ENCODE measurements at regions of chr1 and their contacts with region 1.

Region 1: GRCh38 chr1:168966215-168966614 is 140.3 kb upstream of the ATP1B1 start:
- DNase-seq: no peak
- H3K4me3 ChIP-seq: no peak overlapping the region
- H3K27ac ChIP-seq: no peak overlapping the region
- H3K4me1 ChIP-seq: no peaks in the 10 kb centered on the region
- H3K27me3 ChIP-seq: no peaks in the 10 kb centered on the region
- CTCF ChIP-seq: no peak

Region 2: GRCh38 chr1:169012416-169012815 is 46.2 kb after region 1 on chr1:
- intact Hi-C with region 1: loop called (anchors 5 kb)
- DNase-seq: no peak
- H3K4me3 ChIP-seq: no peak overlapping the region
- H3K27ac ChIP-seq: no peak overlapping the region
- H3K4me1 ChIP-seq: no peaks in the 10 kb centered on the region
- H3K27me3 ChIP-seq: no peaks in the 10 kb centered on the region
- CTCF ChIP-seq: no peak

Region 3: GRCh38 chr1:169072945-169073730 is 106.9 kb after region 1 on chr1:
- intact Hi-C with region 1: no loop called
- DNase-seq: peak; percentile 78
- H3K4me3 ChIP-seq: no peak overlapping the region
- H3K27ac ChIP-seq: peak overlapping the region; percentile 87
- H3K4me1 ChIP-seq: no peaks in the 10 kb centered on the region
- H3K27me3 ChIP-seq: no peaks in the 10 kb centered on the region
- CTCF ChIP-seq: no peak

Measured in colonic mucosa (tissue), 4 donors.